ENCODE measurements at regions of chr3 and their contacts with region 1.

Region 1: DNA sequence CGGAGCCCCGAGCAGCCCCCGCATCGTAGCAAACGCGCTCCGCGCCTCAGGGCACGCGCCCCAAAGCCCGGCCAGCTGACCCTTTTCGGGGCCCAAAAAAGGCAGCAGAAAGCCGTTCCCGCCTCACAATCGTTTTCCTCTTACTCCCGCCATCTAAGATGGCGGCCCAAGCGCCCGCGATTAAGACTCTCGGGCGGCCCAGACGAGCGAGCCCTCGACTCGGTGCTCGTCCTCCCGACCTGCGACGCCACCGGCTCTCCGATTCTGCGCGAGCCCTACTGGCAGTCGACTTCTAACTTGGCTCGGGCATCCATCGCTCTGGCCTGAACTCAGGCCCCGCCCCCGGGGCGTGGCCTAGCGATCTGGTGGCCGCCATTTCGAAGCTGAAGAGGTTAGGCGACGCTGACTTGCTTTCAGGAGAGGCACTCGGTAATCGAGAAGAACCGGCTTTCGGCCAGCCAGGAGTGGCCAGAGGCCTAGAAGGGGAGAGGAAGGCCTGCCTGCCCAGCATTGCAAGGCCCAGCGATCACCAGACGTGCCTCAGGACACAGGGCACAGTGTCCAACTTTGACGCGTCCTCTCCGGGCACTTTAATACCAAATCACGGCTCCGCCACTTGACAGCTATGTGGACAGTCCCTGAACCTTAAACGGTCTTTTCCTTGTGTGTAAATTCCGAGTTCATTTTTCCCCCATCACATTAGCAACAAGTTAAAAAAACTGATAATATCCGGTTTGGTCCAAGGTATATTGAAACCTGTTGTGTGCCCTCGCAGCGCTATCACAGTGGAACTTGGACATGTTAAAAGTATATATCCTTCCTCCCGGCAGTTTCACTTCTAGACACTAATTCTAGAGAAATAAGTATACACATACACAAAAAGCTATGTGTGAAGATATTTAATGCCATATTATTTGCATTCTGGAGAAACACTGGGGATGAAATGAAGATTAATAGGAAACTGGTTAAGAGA is at the start of gene RAF1:
- H3K4me3 Mint-ChIP-seq: peak within 1 kb of the TSS; percentile 83
- H3K27ac Mint-ChIP-seq: peak within 1 kb of the TSS; percentile 97
- H3K4me1 Mint-ChIP-seq: peaks cover 32% of the 10 kb centered on the region
- H3K27me3 Mint-ChIP-seq: no peaks in the 10 kb centered on the region

Region 2: DNA sequence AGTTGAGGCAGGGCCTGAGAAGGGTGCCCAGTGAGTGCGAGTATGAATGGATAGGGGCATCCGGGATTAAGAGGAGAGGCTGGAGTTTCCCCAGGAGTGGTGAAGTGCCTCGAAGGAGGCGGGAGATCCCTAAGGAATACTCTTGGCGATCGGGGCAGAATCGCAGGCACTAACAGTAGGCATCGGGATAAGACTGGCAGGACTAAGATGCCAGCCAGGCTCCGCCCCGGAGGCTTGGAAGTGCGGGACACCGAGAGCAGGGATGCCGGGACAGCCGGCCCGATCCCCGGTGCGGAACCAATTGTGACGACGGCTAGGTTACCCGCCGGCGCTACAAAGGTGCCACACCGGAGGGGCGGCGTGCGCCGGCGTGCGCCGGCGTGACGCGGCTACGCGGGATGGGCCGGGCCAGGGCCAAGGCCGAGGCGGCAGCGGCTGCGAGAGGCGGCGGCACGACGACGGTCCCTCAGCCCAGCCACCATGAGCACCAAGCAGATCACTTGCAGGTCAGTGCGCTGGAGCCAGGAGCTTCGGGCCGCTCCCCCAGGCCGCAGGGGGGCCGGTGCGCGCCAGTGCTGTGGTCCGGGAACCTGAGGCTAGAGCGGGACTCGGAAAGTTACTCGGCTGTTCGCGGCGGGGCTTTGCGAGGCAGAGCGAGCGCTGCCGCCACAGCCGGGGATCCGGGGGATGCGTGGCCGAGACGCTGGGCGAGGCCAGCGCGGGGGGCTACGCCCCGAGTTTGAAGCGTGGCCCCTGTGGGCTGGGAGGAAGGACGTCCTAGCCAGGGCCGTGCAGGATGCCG is 107.3 kb before region 1 on chr3 and contains the start of gene MKRN2:
- intact Hi-C with region 1: loop called (anchors 2 kb)
- H3K4me3 Mint-ChIP-seq: peak within 1 kb of the TSS; percentile 85
- H3K27ac Mint-ChIP-seq: peak within 1 kb of the TSS; percentile 89
- H3K4me1 Mint-ChIP-seq: peaks cover 52% of the 10 kb centered on the region
- H3K27me3 Mint-ChIP-seq: peaks cover 21% of the 10 kb centered on the region

Region 3: DNA sequence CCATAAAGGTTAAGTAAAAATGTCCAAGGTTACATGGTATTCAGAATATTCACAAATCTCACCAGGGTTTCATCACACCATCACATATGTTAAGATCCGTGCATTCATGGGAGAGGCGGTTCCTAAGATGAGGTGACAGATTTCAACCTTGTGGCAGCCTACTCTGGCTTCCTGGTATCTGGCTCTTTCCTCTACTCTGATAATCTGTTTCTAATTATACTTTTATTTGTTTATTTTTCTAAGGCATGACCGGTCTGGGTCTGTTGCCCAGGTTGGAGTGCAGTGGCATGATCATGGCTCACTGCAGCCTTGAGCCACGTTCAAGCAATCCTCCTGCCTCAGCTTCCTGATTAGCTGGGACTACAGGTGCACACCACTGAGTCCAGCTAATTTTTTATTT is 34.7 kb before region 1 on chr3:
- intact Hi-C with region 1: no loop called
- H3K4me3 Mint-ChIP-seq: no peak overlapping the region
- H3K27ac Mint-ChIP-seq: no peak overlapping the region
- H3K4me1 Mint-ChIP-seq: peaks cover 48% of the 10 kb centered on the region
- H3K27me3 Mint-ChIP-seq: no peaks in the 10 kb centered on the region

Region 4: GRCh38 chr3:12681943-12682390 is 17.7 kb after region 1 on chr3:
- intact Hi-C with region 1: loop called (anchors 2 kb)
- H3K4me3 Mint-ChIP-seq: no peak overlapping the region
- H3K27ac Mint-ChIP-seq: peak overlapping the region; percentile 96
- H3K4me1 Mint-ChIP-seq: peaks cover 25% of the 10 kb centered on the region
- H3K27me3 Mint-ChIP-seq: no peaks in the 10 kb centered on the region

Measured in dendritic cell treated with granulocyte-macrophage colony-stimulating factor and Interleukin-4, amounts not matched to agents 40 ng/mL and 50 ng/mL, for 4 days (primary cell).